Activated T-helper 1 cell treated with anti-CD3 and anti-CD28 coated beads, Interleukin-12 subunit alpha, Interleukin-12 subunit beta, Interleukin-2, Interleukin-4 antibody, amounts not matched to agents 30 ng/mL and 10 ng/mL and 1 ng/mL, durations not matched to agents 14 hours and 24 hours and 36 hours (primary cell): ENCODE measurements at regions of chr12 and their contacts with region 1.

Region 1: DNA sequence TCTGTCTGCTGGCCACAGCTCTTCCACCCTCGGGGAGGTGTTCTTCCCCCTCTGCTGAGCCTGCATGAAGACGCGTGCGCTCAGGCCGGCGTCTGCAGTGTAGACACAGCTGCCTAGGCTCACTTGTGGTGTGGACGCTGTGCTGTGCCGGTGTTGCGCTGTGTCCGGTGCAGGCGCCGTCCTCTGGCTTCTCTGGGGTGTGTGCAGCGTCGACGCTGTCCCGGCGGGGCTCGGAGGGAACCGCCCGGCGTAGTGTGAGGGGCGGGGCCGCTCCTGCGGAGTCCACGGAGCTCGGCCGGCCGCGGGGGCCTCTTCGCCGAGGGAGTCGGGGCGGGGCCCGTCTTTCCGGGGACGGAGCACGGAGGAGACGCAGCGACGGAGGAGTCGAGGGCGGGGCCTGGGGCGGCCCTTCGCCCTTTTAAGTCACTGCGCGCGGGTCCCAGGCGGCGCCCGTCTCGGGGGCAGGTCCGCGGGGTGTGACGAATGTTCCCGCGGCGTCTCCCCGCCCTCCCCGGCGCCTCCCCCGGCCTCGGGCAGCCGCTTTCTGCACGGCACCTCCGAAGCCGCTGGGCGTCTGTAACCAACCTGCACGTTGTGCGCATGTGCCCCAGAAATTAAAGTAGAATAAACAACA is 45.2 kb downstream of the NOC4L start:
- DNase-seq: peak; percentile 95
- H3K4me3 Mint-ChIP-seq: peak overlapping the region; percentile 93
- H3K27ac Mint-ChIP-seq: peak overlapping the region; percentile 87
- H3K4me1 Mint-ChIP-seq: peaks cover 31% of the 10 kb centered on the region
- H3K27me3 Mint-ChIP-seq: peaks cover 5% of the 10 kb centered on the region

Region 2: DNA sequence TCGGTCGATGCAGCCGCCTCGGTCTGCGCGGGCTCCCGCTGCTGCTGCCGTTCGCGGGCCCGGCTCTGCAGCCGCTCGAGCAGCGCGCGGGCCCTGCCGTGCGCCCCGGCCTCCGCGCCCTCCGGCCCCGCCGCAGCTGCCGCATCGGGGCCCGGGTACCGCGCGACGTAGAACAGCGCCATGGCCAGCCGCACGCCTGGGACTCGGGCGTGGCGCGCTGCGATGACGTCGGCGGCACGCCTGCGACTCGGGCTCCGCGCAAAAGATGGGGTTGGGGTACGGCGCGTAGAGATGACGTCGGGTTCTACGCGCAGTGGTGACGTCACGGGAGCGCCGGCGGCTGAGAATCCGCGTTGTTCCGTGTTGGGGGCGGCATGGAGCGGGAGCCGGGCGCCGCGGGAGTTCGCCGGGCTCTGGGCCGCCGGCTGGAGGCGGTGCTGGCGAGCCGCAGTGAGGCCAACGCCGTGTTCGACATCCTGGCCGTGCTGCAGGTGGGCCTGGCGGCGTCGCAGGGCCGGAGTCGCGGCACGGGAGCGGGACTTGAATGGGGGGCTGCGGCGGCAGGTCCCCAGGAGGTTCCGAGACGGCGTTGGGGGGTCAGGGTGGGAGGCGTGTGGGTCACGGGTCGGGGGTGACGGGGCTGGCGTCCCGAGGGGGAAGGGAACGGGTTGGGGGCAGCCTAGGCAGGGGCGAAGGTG is 45.2 kb before region 1 on chr12 and contains the starts of genes DDX51 and NOC4L:
- intact Hi-C with region 1: loop called (anchors 1 kb)
- DNase-seq: peak; percentile 96
- H3K4me3 Mint-ChIP-seq: peak within 1 kb of the TSS; percentile 90
- H3K27ac Mint-ChIP-seq: peak within 1 kb of the TSS; percentile 95
- H3K4me1 Mint-ChIP-seq: peaks cover 12% of the 10 kb centered on the region
- H3K27me3 Mint-ChIP-seq: peaks cover 2% of the 10 kb centered on the region
- total RNA-seq, gene DDX51: 48.8 and 55.0 TPM in 2 replicates
- total RNA-seq, gene NOC4L: 49.5 and 51.3 TPM in 2 replicates

Region 3: DNA sequence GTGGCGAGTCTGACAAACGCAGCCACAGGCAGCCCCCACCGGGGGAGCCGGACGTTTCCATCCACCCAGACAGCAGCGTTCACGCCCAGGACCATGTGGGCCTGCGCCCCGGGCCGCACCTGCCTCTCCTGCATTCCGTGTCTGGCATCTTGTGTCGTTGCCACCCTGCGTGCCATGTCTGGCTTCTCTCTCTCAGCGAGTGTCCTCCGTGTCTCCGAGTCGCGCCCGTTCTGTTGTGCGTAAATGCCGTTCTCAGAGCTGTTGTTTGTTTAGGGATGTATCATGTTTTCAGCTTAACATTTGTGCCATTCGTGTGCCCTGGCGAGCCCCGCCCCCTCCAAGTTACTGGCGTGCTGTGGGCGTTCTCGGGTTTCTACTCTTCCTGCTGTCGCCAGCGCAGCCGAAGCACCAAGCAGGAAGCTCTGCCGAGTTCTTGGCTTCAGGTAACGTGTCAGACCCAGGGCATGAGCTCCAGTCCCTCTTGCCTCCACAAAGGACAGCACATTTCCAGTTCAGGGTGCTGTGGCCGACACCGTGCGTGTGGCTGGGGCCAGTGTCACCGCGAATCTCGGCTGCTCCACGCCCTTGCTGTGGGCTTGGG is 10.6 kb before region 1 on chr12:
- intact Hi-C with region 1: loop called (anchors 1 kb)
- DNase-seq: no peak
- H3K4me3 Mint-ChIP-seq: peak overlapping the region; percentile 75
- H3K27ac Mint-ChIP-seq: peak overlapping the region; percentile 70
- H3K4me1 Mint-ChIP-seq: peaks cover 12% of the 10 kb centered on the region
- H3K27me3 Mint-ChIP-seq: peaks cover 10% of the 10 kb centered on the region

Region 4: GRCh38 chr12:132445884-132446632 is 256.6 kb after region 1 on chr12:
- intact Hi-C with region 1: loop called (anchors 1 kb)
- DNase-seq: peak; percentile 62
- H3K4me3 Mint-ChIP-seq: peak overlapping the region; percentile 93
- H3K27ac Mint-ChIP-seq: peak overlapping the region; percentile 97
- H3K4me1 Mint-ChIP-seq: peaks cover 37% of the 10 kb centered on the region
- H3K27me3 Mint-ChIP-seq: peaks cover 3% of the 10 kb centered on the region

Region 5: GRCh38 chr12:132687208-132688164 is 498.0 kb after region 1 on chr12 and contains the starts of genes POLE and PXMP2:
- intact Hi-C with region 1: loop called (anchors 1 kb)
- DNase-seq: peak; percentile 91
- H3K4me3 Mint-ChIP-seq: peak within 1 kb of the TSS; percentile 84
- H3K27ac Mint-ChIP-seq: peak within 1 kb of the TSS; percentile 80
- H3K4me1 Mint-ChIP-seq: peaks cover 26% of the 10 kb centered on the region
- H3K27me3 Mint-ChIP-seq: no peaks in the 10 kb centered on the region
- total RNA-seq, gene POLE: 168 and 170 TPM in 2 replicates
- total RNA-seq, gene PXMP2: 21.5 and 23.3 TPM in 2 replicates